Panc1 (cell line): ENCODE measurements at regions of chr1 and their contacts with region 1.

Region 1: DNA sequence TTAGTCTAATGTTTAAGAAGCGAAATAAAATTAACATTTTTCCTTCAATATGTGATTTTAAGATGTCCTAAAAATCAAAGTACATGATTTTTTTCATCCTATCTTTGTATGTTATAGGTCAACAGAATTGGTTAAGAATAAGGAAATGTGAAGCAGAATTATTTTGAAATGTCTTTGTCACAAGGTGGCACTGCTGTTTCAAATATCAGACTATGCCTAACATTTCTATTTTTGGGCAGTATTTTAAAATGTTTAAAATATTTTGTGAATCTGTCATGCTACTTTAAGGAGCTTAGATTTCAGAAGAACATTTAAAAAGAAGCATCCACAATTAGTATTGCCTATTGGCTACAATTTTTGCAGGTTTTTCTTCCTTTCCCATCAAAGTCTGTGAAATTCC is 38.7 kb downstream of the AMY1C start:
- DNase-seq: no peak
- ATAC-seq: no peak
- H3K4me3 ChIP-seq: no peak overlapping the region
- H3K27ac ChIP-seq: no peak overlapping the region
- H3K4me1 ChIP-seq: no peaks in the 10 kb centered on the region
- H3K27me3 ChIP-seq: no peaks in the 10 kb centered on the region
- CTCF ChIP-seq: peak; percentile 42; the same call in 1 of the 2 replicates

Region 2: GRCh38 chr1:103931891-103932290 is 143.5 kb after region 1 on chr1:
- CTCF ChIA-PET with region 1: no interaction called
- POLR2A ChIA-PET with region 1: no interaction called
- in situ Hi-C with region 1: no loop called
- intact Hi-C with region 1: no loop called
- DNase-seq: no peak
- ATAC-seq: no peak
- H3K4me3 ChIP-seq: no peak overlapping the region
- H3K27ac ChIP-seq: no peak overlapping the region
- H3K4me1 ChIP-seq: no peaks in the 10 kb centered on the region
- H3K27me3 ChIP-seq: no peaks in the 10 kb centered on the region
- CTCF ChIP-seq: no peak

Region 3: GRCh38 chr1:104132382-104132973 is 344.1 kb after region 1 on chr1:
- CTCF ChIA-PET with region 1: no interaction called
- POLR2A ChIA-PET with region 1: no interaction called
- in situ Hi-C with region 1: no loop called
- intact Hi-C with region 1: loop called (anchors 2 kb)
- DNase-seq: peak; percentile 15
- ATAC-seq: peak; percentile 86
- H3K4me3 ChIP-seq: no peak overlapping the region
- H3K27ac ChIP-seq: no peak overlapping the region
- H3K4me1 ChIP-seq: no peaks in the 10 kb centered on the region
- H3K27me3 ChIP-seq: no peaks in the 10 kb centered on the region
- CTCF ChIP-seq: peak; percentile 73